ENCODE measurements at regions of chr12 and their contacts with region 1.

Region 1: GRCh38 chr12:104720339-104721038 is 237.6 kb downstream of the SLC41A2 start:
- DNase-seq: peak; percentile 81
- H3K4me3 Mint-ChIP-seq: peak overlapping the region; percentile 70
- H3K27ac Mint-ChIP-seq: peak overlapping the region; percentile 79
- H3K4me1 Mint-ChIP-seq: peaks cover 35% of the 10 kb centered on the region
- H3K27me3 Mint-ChIP-seq: no peaks in the 10 kb centered on the region

Region 2: GRCh38 chr12:104258476-104259067 is 461.9 kb before region 1 on chr12:
- CTCF ChIA-PET with region 1: no interaction called
- intact Hi-C with region 1: no loop called
- DNase-seq: no peak
- H3K4me3 Mint-ChIP-seq: no peak overlapping the region
- H3K27ac Mint-ChIP-seq: no peak overlapping the region
- H3K4me1 Mint-ChIP-seq: no peaks in the 10 kb centered on the region
- H3K27me3 Mint-ChIP-seq: no peaks in the 10 kb centered on the region

Region 3: DNA sequence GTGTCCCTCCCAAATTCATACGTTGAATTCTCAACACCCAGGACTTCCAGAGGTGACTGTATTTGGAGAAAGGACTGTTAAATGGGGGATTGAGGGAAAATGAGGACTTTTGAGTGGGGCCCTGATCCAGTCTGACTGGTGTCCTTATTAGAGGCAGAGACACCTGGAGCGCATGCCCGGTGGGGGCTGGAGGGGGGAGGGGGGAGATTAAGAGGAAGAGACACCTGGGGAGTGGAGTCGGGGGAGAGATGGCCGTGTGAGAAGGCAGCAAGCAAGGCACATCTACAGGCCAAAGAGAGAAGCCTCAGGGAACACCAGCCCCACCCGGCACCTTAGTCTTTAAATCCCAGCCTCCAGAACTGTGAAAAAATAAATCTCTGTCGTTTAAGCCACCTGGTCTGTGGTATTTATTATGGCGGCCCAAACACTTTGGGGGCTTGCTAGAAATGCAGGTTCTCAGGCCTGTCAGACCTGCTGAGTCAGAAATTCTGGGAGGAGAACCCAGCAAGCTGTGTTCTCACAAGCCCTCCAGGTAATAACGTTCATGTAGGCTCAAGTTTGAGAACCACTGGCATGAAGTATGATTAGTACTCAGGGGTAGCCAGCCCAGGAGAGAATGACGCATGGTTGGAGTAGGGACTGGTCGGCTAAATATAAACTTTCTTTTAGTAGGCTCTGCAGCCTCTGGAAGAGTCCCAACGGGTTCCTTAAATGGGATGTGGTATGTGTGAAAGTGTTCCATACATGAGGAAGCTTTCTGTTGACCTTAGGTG is 28.1 kb after region 1 on chr12:
- CTCF ChIA-PET with region 1: no interaction called
- intact Hi-C with region 1: loop called (anchors 2 kb)
- DNase-seq: no peak
- H3K4me3 Mint-ChIP-seq: peak overlapping the region; percentile 51
- H3K27ac Mint-ChIP-seq: no peak overlapping the region
- H3K4me1 Mint-ChIP-seq: peaks cover 43% of the 10 kb centered on the region
- H3K27me3 Mint-ChIP-seq: no peaks in the 10 kb centered on the region

Measured in activated naive CD4-positive, alpha-beta T cell treated with anti-CD3 and anti-CD28 coated beads for 36 hours (primary cell).